Naive thymus-derived CD4-positive, alpha-beta T cell (primary cell): ENCODE measurements at regions of chrX and their contacts with region 1.

Region 1: DNA sequence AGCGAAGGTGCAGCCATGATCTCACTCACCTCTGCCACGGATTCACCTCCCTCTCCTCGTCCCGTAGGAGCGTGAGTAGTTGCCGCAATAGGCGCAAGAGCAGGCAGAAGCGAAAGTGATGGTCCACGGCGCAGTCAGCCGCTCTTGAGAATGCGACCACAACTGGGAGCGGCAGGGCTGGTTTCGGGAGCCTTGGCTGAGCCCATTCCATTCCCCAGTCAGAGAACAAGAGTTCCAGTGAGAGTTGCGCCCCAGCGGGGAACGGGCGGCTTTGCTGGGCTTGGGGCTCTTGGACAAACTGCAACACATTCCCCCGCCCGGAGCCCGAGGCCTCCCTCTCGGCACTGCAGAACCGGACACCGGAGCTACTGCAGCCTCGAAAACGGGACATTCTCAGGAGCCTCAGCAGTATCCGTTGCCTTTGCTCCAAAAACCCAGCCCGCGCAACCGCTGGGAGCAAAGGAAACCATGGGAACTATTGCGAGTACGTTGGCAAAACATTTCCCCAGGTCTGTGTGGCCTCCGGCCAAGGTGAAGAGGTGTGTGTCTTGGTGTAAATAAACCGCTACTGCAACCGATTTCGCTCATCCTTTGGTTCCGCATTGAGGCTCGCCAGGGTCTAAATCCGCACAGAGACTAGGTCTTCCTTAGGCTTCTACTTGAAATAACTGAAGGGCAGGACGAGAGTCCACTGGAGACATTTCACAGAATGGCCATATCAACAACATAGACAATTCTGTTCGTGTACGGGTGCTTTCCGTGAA is 5.7 kb upstream of the ZBTB33 start:
- DNase-seq: peak; percentile 22 to 68 (median 52)
- ATAC-seq: peak; percentile 92
- H3K4me3 ChIP-seq: peak overlapping the region; percentile 73
- H3K4me3 Mint-ChIP-seq: peak overlapping the region; percentile 85 to 100 (median 96)
- H3K27ac ChIP-seq: peak overlapping the region; percentile 77
- H3K27ac Mint-ChIP-seq: peak overlapping the region; percentile 78 to 97 (median 90)
- H3K4me1 ChIP-seq: peaks cover 5 to 6% of the 10 kb centered on the region in 2 donors
- H3K4me1 Mint-ChIP-seq: peaks cover 12 to 32% (median 27%) of the 10 kb centered on the region in 7 donors
- H3K27me3 ChIP-seq: no peaks in the 10 kb centered on the region
- H3K27me3 Mint-ChIP-seq: peaks cover 0 to 4% (median 0%) of the 10 kb centered on the region in 5 donors

Region 2: GRCh38 chrX:119055687-119056086 is 1189.2 kb before region 1 on chrX:
- CTCF ChIA-PET with region 1: no interaction called
- POLR2A ChIA-PET with region 1: no interaction called
- intact Hi-C with region 1: no loop called
- DNase-seq: no peak
- ATAC-seq: no peak
- H3K4me3 ChIP-seq: no peak overlapping the region
- H3K4me3 Mint-ChIP-seq: no peak overlapping the region
- H3K27ac ChIP-seq: no peak overlapping the region
- H3K27ac Mint-ChIP-seq: no peak overlapping the region
- H3K4me1 ChIP-seq: no peaks in the 10 kb centered on the region
- H3K4me1 Mint-ChIP-seq: no peaks in the 10 kb centered on the region
- H3K27me3 ChIP-seq: no peaks in the 10 kb centered on the region
- H3K27me3 Mint-ChIP-seq: peaks cover 0 to 10% (median 6%) of the 10 kb centered on the region in 5 donors

Region 3: DNA sequence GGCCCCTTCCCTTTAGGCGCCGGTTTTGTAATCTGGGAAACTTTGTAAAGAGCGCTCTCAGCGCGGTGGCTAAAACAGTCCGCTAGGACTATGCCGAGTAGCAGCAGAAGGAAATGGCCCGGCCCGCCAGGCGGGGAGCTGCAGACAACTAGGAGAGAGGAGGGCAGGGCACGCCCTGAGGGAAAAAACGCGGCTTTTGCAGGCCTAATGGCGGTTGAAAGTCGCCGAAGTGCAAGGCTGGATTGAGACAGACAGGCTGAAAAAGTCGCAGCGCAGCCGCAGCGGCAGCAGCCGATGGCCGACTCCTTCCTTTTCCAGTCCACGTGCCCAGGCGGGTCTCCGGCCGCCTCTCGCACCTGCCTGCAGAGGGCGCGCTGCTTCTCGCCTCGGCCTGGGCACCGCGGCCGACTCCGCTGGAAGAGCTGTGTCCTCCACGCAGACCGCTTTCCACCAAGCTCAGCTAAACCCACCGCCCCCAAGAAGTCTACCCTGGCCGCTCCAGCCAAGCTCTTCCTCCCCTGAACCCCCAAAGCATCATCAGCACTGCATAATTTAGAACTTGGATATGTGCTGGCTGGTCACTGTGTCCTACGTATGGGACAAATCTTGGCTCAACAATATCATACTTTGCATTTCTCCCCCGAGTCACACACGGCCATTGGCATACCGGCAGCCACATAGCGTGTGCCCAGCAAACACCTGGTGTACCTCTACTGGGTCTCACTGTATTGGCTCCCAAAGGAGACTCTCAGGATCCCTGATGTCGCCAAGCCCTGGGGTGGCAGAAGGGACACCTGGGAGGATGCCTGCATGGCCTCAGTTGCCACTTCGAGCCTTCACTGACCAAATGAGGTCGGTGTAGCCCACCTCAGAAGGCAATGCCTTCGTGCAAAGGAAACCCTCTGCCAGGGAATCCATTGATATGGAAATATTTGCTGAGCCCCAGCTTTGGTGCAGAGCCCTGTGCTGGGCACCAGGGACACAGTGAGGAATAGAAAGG is 762.1 kb before region 1 on chrX:
- CTCF ChIA-PET with region 1: no interaction called
- POLR2A ChIA-PET with region 1: no interaction called
- intact Hi-C with region 1: loop called in 1 of 2 experiments (anchors 10 kb)
- DNase-seq: peak; percentile 41 to 66 (median 55)
- ATAC-seq: peak; percentile 96
- H3K4me3 ChIP-seq: peak overlapping the region; percentile 54
- H3K4me3 Mint-ChIP-seq: peak overlapping the region; percentile 65 to 89 (median 83)
- H3K27ac ChIP-seq: peak overlapping the region; percentile 16
- H3K27ac Mint-ChIP-seq: peak overlapping the region in 8 of 9 donors; percentile 51 to 85 (median 70)
- H3K4me1 ChIP-seq: peaks cover 0 to 4% of the 10 kb centered on the region in 2 donors
- H3K4me1 Mint-ChIP-seq: peaks cover 0 to 16% (median 6%) of the 10 kb centered on the region in 7 donors
- H3K27me3 ChIP-seq: no peaks in the 10 kb centered on the region
- H3K27me3 Mint-ChIP-seq: no peaks in the 10 kb centered on the region

Region 4: DNA sequence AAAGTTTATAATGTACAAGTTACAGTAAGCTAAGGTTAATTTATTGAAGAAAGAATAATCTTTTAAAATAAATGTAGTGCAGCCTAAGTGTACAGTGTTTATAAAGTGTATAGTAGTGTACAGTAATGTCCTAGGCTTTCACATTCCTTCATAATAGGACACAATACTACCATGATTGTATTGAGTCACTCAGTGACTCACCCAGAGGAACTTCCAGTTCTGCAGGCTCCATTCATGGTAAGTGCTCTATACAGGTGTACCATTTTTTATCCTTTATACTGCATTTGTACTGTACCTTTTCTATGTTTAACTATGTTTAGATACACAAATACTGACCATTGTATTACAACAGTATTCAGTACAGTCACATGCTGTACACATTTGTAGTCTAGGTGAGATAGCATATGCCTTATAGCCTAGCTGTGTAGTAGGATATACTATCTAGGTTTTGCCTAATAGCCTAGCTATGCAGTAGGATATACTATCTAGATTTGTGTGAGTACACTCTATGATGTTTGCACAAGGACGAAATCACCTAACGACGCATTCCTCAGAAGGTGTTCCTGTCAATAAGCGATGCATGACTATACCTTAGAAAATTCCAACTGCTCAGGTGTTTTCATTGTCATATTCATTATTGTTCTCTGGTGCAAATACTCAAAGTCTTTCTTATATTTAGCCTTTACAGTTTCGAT is 71.8 kb after region 1 on chrX:
- CTCF ChIA-PET with region 1: no interaction called
- POLR2A ChIA-PET with region 1: no interaction called
- intact Hi-C with region 1: no loop called
- DNase-seq: no peak
- ATAC-seq: no peak
- H3K4me3 ChIP-seq: no peak overlapping the region
- H3K4me3 Mint-ChIP-seq: no peak overlapping the region
- H3K27ac ChIP-seq: no peak overlapping the region
- H3K27ac Mint-ChIP-seq: no peak overlapping the region
- H3K4me1 ChIP-seq: no peaks in the 10 kb centered on the region
- H3K4me1 Mint-ChIP-seq: peaks cover 0 to 3% (median 0%) of the 10 kb centered on the region in 7 donors
- H3K27me3 ChIP-seq: no peaks in the 10 kb centered on the region
- H3K27me3 Mint-ChIP-seq: peaks cover 5 to 58% (median 28%) of the 10 kb centered on the region in 5 donors